ENCODE measurements at regions of chr12 and their contacts with region 1.

Region 1: DNA sequence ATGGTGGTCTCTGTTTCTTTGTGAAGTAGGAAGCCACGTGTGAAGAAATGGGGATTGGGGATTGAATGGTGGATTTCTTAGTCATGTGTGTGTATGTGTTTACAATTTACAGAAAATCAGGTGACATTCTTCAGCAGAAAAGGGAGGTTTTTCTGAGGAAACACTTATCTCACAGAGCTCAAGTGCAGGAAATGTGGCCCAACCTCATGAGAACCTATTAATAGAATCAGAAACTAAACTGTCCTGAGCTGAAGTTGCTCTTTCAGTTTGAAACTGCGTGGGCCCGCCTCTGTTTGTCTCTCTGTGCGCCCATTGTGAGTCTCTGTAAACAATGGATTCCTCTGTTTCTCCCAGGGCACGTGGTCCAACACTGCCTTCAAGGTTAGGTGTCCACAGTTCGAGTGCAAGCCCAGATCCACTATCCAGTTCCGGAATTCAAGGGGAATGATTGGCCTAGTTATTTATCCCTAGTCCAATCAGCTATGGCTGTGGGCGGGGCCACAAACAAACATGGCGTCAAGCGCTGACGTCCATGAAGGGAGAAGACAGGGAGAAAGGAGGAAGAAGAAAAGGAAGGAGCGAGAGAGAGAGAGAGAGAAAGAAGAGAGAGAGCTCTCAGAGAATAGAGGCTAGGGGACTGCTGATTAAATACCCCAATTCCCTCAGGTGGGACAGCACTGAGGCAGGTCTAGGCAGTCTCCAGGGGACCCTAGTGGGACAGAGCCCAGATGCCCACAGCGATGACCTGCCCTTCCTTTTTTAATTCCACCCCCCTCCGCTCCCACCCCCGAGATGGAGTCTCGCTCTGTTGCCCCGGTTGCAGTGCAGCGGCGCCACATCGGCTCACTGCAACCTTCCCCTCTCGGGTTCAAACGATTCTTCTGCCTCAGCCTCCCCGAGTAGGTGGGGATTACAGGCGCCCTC is 31.4 kb upstream of the C12orf76 start:
- H3K4me3 Mint-ChIP-seq: peak overlapping the region; percentile 63
- H3K27ac Mint-ChIP-seq: peak overlapping the region; percentile 91
- H3K4me1 Mint-ChIP-seq: peaks cover 42% of the 10 kb centered on the region
- H3K27me3 Mint-ChIP-seq: no peaks in the 10 kb centered on the region

Region 2: GRCh38 chr12:110048242-110049027 is 31.3 kb before region 1 on chr12 and contains the start of gene C12orf76:
- intact Hi-C with region 1: loop called (anchors 2 kb)
- H3K4me3 Mint-ChIP-seq: peak within 1 kb of the TSS; percentile 93
- H3K27ac Mint-ChIP-seq: peak within 1 kb of the TSS; percentile 98
- H3K4me1 Mint-ChIP-seq: peaks cover 43% of the 10 kb centered on the region
- H3K27me3 Mint-ChIP-seq: no peaks in the 10 kb centered on the region

Region 3: GRCh38 chr12:110253176-110253575 is 173.4 kb after region 1 on chr12:
- intact Hi-C with region 1: no loop called
- H3K4me3 Mint-ChIP-seq: peak overlapping the region; percentile 17
- H3K27ac Mint-ChIP-seq: peak overlapping the region; percentile 79
- H3K4me1 Mint-ChIP-seq: peaks cover 46% of the 10 kb centered on the region
- H3K27me3 Mint-ChIP-seq: peaks cover 3% of the 10 kb centered on the region

Measured in dendritic cell treated with granulocyte-macrophage colony-stimulating factor and Interleukin-4, amounts not matched to agents 40 ng/mL and 50 ng/mL, for 4 days (primary cell).